ENCODE measurements at regions of chr20 and their contacts with region 1.

Region 1: GRCh38 chr20:10434832-10435812 is at the start of gene SLX4IP:
- DNase-seq: peak; percentile 95
- H3K4me3 Mint-ChIP-seq: peak within 1 kb of the TSS; percentile 92
- H3K27ac Mint-ChIP-seq: peak within 1 kb of the TSS; percentile 98
- H3K4me1 Mint-ChIP-seq: peaks cover 35% of the 10 kb centered on the region
- H3K27me3 Mint-ChIP-seq: no peaks in the 10 kb centered on the region
- total RNA-seq, gene SLX4IP: 5.9 and 6.6 TPM in 2 replicates

Region 2: GRCh38 chr20:10219452-10219791 is 215.7 kb before region 1 on chr20:
- intact Hi-C with region 1: loop called (anchors 1 kb)
- DNase-seq: peak; percentile 93
- H3K4me3 Mint-ChIP-seq: peak overlapping the region; percentile 66
- H3K27ac Mint-ChIP-seq: peak overlapping the region; percentile 40
- H3K4me1 Mint-ChIP-seq: peaks cover 15% of the 10 kb centered on the region
- H3K27me3 Mint-ChIP-seq: peaks cover 22% of the 10 kb centered on the region

Region 3: GRCh38 chr20:10453241-10453640 is 18.1 kb after region 1 on chr20:
- intact Hi-C with region 1: no loop called
- DNase-seq: peak; percentile 81
- H3K4me3 Mint-ChIP-seq: peak overlapping the region; percentile 38
- H3K27ac Mint-ChIP-seq: peak overlapping the region; percentile 70
- H3K4me1 Mint-ChIP-seq: peaks cover 22% of the 10 kb centered on the region
- H3K27me3 Mint-ChIP-seq: no peaks in the 10 kb centered on the region

Region 4: GRCh38 chr20:10463622-10464021 is 28.5 kb after region 1 on chr20:
- intact Hi-C with region 1: loop called (anchors 1 kb)
- DNase-seq: no peak
- H3K4me3 Mint-ChIP-seq: no peak overlapping the region
- H3K27ac Mint-ChIP-seq: no peak overlapping the region
- H3K4me1 Mint-ChIP-seq: peaks cover 19% of the 10 kb centered on the region
- H3K27me3 Mint-ChIP-seq: no peaks in the 10 kb centered on the region

Region 5: GRCh38 chr20:10558635-10559187 is 123.6 kb after region 1 on chr20:
- intact Hi-C with region 1: loop called (anchors 1 kb)
- DNase-seq: peak; percentile 88
- H3K4me3 Mint-ChIP-seq: peak overlapping the region; percentile 52
- H3K27ac Mint-ChIP-seq: peak overlapping the region; percentile 36
- H3K4me1 Mint-ChIP-seq: peaks cover 28% of the 10 kb centered on the region
- H3K27me3 Mint-ChIP-seq: no peaks in the 10 kb centered on the region

Region 6: DNA sequence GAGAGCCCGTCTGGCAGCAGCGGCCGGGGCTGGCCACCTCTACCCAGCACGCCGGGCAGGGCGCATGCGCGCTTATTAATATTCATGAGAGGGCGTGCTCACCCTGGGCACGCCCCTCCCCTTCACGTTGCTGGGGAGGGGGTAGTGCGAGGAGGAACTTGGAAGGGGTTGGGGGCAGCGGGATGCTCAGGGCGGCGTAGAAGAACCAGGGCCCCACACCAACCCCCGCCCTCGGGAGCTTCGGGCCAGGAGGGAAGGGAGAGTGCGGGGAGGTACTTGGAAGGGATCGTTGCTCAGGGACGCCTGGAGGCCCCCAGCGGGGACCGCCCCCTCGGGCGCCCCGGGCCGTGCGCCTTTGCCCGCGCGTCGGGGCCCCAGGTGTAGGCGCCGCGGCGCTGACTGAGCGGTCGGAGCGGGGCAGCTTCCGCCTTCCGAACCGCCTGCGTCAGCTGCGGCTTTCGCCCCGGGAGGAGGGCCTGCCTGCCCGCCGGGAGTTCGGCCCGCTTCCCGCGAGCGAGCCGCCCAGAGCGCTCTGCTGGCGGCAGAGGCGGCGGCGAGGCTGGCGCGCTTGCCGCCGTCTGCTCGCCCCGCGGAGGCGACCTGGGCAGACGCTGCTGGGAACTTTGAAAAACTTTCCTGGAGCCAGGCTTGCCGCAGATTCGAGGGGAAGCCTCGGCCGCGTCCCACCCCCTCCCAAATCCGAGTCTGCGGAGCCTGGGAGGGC is 239.0 kb after region 1 on chr20 and contains the start of gene JAG1:
- intact Hi-C with region 1: loop called (anchors 2 kb)
- DNase-seq: peak; percentile 93
- H3K4me3 Mint-ChIP-seq: peak within 1 kb of the TSS; percentile 93
- H3K27ac Mint-ChIP-seq: peak within 1 kb of the TSS; percentile 88
- H3K4me1 Mint-ChIP-seq: peaks cover 30% of the 10 kb centered on the region
- H3K27me3 Mint-ChIP-seq: peaks cover 67% of the 10 kb centered on the region
- total RNA-seq, gene JAG1: 1.1 and 1.3 TPM in 2 replicates